Activated CD4-positive, alpha-beta memory T cell treated with anti-CD3 and anti-CD28 coated beads, Interleukin-2, amount 10 ng/mL, durations not matched to agents 7 days and 5 days (primary cell): ENCODE measurements at regions of chr3 and their contacts with region 1.

Region 1: GRCh38 chr3:130093741-130094391 is 12.2 kb downstream of the ALG1L2 start:
- DNase-seq: peak; percentile 62
- H3K4me3 Mint-ChIP-seq: peak overlapping the region; percentile 63
- H3K27ac Mint-ChIP-seq: peak overlapping the region; percentile 81
- H3K4me1 Mint-ChIP-seq: peaks cover 45% of the 10 kb centered on the region
- H3K27me3 Mint-ChIP-seq: no peaks in the 10 kb centered on the region

Region 2: DNA sequence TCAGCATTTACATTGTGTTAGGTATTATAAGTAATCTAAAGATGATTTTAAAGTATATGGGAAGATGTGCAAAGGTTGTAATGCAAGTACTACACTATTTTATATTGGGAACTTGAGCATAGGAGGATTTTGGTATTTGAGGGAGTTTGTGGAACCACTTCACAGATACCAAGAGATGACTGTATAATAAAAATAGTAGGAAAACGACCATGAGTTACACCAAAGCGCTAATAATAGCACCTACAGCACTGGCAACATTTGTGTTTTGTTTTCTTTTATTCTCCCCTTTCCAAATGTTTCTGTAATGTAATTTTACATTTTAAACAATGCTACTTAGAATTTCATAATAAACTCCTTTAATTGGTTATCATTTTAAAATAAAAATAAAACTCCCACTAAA is 920.7 kb before region 1 on chr3:
- CTCF ChIA-PET with region 1: no interaction called
- POLR2A ChIA-PET with region 1: no interaction called
- DNase-seq: no peak
- H3K4me3 Mint-ChIP-seq: no peak overlapping the region
- H3K27ac Mint-ChIP-seq: no peak overlapping the region
- H3K4me1 Mint-ChIP-seq: peaks cover 63% of the 10 kb centered on the region
- H3K27me3 Mint-ChIP-seq: no peaks in the 10 kb centered on the region

Region 3: GRCh38 chr3:129942296-129942695 is 151.6 kb before region 1 on chr3:
- CTCF ChIA-PET with region 1: interaction called, 32 read pairs
- POLR2A ChIA-PET with region 1: no interaction called
- DNase-seq: peak; percentile 36
- H3K4me3 Mint-ChIP-seq: no peak overlapping the region
- H3K27ac Mint-ChIP-seq: no peak overlapping the region
- H3K4me1 Mint-ChIP-seq: peaks cover 12% of the 10 kb centered on the region
- H3K27me3 Mint-ChIP-seq: peaks cover 8% of the 10 kb centered on the region

Region 4: DNA sequence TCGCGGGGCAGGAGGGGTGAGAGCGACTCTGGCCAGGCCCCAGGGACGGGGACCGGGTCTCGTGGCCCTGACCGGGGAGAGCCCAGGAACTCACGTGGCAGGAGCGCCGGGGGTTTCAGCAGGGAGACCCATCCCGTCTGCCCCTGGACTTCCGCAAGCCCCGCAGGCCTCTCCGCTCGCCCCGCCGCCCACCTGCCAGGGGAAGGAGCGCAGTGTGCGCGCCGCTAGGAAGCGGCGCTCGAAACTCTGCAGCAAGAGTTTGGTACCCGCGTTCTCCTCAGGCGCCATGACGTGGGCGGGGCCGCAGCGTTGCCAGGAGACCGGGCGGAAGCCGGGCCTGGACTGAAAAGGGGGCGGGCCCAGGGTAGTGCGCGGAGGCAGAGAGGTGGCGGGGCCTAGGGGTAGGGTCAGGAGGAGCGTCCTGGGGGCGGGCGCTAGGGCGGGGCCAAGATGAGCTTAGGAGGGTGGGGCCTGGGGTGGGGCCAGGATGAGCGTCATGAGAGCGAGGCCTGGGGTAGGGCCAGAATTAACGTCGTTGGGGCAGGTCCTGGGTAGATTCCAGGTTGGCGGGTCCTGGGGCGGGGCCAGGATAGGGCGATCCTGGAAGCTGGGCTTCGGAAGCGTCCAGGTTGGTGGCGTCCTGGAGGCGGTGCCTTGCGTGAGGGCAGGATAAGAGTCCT is 17.5 kb after region 1 on chr3:
- CTCF ChIA-PET with region 1: interaction called, 11 read pairs
- POLR2A ChIA-PET with region 1: no interaction called
- DNase-seq: peak; percentile 99
- H3K4me3 Mint-ChIP-seq: peak overlapping the region; percentile 94
- H3K27ac Mint-ChIP-seq: peak overlapping the region; percentile 98
- H3K4me1 Mint-ChIP-seq: peaks cover 21% of the 10 kb centered on the region
- H3K27me3 Mint-ChIP-seq: peaks cover 8% of the 10 kb centered on the region

Region 5: DNA sequence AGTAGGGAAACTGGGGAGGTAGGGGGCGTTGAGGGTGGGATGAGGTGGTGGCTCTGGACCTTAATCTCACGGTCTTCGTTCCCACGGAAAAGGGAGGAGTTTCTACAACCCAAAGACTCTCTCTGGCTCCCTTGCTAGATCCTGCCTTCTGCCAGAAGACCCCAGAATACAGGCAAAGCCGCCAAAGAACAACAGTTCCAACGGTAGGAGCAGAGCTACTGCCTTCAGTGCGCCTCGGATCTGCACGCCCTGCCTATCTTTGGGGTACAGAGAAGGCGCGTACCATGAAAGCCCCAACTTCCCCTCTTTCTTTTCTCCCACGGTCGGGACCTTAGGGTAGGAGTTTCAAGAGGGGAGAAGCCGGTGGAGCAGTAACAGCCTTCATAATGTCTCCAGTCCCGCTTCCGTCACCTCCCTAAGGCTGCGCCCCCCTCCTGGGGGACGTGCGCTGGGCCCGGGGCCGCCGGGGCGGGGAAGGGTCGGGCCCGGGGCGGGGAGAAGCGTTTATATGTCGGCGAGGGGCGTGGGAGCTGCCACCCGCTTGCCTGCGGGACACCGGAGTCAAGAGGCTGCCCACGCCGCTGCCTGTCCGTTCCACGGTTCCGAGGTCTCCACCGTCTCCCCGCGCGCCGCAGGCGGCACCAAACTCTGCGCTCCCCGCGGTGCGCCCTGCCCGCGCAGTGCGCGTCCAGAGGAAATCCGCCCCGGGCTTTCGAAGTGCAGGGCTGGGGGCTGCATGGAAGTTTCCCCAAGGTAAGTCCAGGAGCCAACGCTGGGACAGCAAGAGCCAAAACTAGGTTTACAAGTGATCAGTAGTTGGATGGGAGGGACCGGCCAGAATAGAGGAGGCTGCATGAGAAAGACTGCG is 423.0 kb after region 1 on chr3 and contains the start of gene COL6A6:
- CTCF ChIA-PET with region 1: no interaction called
- POLR2A ChIA-PET with region 1: no interaction called
- DNase-seq: no peak
- H3K4me3 Mint-ChIP-seq: no peak within 1 kb of the TSS
- H3K27ac Mint-ChIP-seq: no peak within 1 kb of the TSS
- H3K4me1 Mint-ChIP-seq: no peaks in the 10 kb centered on the region
- H3K27me3 Mint-ChIP-seq: peaks cover 41% of the 10 kb centered on the region
- total RNA-seq, gene COL6A6: not detected